ENCODE measurements at regions of chr11 and their contacts with region 1.

Region 1: GRCh38 chr11:63478896-63479295 is 12.1 kb downstream of the PLAAT5 start:
- DNase-seq: peak; percentile 65
- ATAC-seq: peak; percentile 79
- H3K4me3 Mint-ChIP-seq: no peak overlapping the region
- H3K27ac Mint-ChIP-seq: no peak overlapping the region
- H3K4me1 Mint-ChIP-seq: no peaks in the 10 kb centered on the region
- H3K27me3 Mint-ChIP-seq: peaks cover 18% of the 10 kb centered on the region

Region 2: DNA sequence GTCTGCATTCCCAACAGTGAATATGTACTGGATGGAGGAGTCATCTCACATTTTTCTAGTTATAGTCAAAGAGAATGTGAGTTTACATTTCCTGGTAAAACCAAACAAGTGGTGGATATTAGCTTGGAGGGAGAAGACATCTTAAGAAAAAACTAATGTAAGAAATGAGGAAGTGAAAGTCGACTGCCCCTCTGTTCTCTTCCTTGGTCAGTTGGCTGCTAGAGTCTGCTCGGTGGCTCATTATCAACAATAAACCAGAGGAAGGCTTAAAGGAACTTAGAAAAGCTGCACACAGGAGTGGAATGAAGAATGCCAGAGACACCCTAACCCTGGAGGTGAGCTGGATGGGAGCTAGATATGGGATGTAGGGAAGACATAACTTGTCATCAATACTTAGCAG is 103.5 kb before region 1 on chr11:
- CTCF ChIA-PET with region 1: no interaction called
- DNase-seq: no peak
- ATAC-seq: no peak
- H3K4me3 Mint-ChIP-seq: no peak overlapping the region
- H3K27ac Mint-ChIP-seq: no peak overlapping the region
- H3K4me1 Mint-ChIP-seq: no peaks in the 10 kb centered on the region
- H3K27me3 Mint-ChIP-seq: peaks cover 38% of the 10 kb centered on the region

Region 3: GRCh38 chr11:63508009-63508408 is 29.1 kb after region 1 on chr11:
- CTCF ChIA-PET with region 1: interaction called, 13 read pairs
- DNase-seq: peak; percentile 50
- ATAC-seq: peak; percentile 49
- H3K4me3 Mint-ChIP-seq: no peak overlapping the region
- H3K27ac Mint-ChIP-seq: no peak overlapping the region
- H3K4me1 Mint-ChIP-seq: peaks cover 5% of the 10 kb centered on the region
- H3K27me3 Mint-ChIP-seq: no peaks in the 10 kb centered on the region

Region 4: DNA sequence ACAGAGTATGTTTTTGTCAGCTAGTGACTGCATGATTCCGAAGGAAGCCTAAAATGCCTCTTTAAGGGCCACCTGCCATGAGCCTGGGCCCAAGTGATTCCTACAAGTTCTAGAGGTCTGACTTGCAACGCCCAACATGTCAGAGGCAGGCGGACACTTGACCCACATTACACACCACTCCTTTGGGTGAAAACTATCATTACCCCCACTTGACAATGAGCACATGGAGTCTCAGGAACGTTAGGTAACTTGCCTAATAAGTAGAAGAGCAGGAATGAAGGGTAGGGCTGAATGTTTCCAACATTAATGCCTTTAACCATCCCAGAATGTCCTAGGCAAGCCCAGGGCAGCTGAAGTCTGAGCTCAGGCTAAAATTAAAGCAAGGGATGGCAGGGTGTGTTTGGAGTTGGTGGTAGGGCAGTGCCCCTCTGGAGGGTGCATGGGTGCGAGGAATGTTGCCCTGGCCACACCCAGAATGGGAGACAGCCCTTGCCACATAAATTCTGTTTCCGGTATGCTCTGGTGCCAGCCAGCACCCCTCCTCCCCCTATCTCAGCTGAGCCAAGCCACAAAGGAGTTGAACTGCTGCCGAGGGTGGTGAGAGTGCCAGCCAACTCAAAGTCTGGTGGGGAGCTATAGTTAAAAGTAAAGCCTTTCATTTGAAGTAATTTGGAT is 81.7 kb after region 1 on chr11:
- CTCF ChIA-PET with region 1: no interaction called
- DNase-seq: no peak
- ATAC-seq: no peak
- H3K4me3 Mint-ChIP-seq: no peak overlapping the region
- H3K27ac Mint-ChIP-seq: no peak overlapping the region
- H3K4me1 Mint-ChIP-seq: peaks cover 47% of the 10 kb centered on the region
- H3K27me3 Mint-ChIP-seq: no peaks in the 10 kb centered on the region

Region 5: GRCh38 chr11:63621931-63622782 is 143.3 kb after region 1 on chr11:
- CTCF ChIA-PET with region 1: interaction called, 12 read pairs
- DNase-seq: no peak
- ATAC-seq: no peak
- H3K4me3 Mint-ChIP-seq: no peak overlapping the region
- H3K27ac Mint-ChIP-seq: no peak overlapping the region
- H3K4me1 Mint-ChIP-seq: peaks cover 7% of the 10 kb centered on the region
- H3K27me3 Mint-ChIP-seq: peaks cover 2% of the 10 kb centered on the region

Region 6: GRCh38 chr11:63635762-63636465 is 157.0 kb after region 1 on chr11:
- CTCF ChIA-PET with region 1: interaction called, 127 read pairs
- DNase-seq: peak; percentile 77
- ATAC-seq: peak; percentile 78
- H3K4me3 Mint-ChIP-seq: no peak overlapping the region
- H3K27ac Mint-ChIP-seq: no peak overlapping the region
- H3K4me1 Mint-ChIP-seq: peaks cover 23% of the 10 kb centered on the region
- H3K27me3 Mint-ChIP-seq: no peaks in the 10 kb centered on the region